Activated B cell treated with CpG ODN at 0.5 μM for 24 hours (primary cell): ENCODE measurements at regions of chr3 and their contacts with region 1.

Region 1: GRCh38 chr3:9986237-9986725 is 360 bp downstream of the EMC3 start:
- DNase-seq: no peak
- ATAC-seq: peak; percentile 28
- H3K4me3 Mint-ChIP-seq: peak overlapping the region; percentile 98
- H3K27ac Mint-ChIP-seq: peak overlapping the region; percentile 100
- H3K4me1 Mint-ChIP-seq: peaks cover 24% of the 10 kb centered on the region
- H3K27me3 Mint-ChIP-seq: no peaks in the 10 kb centered on the region
- CTCF ChIP-seq: no peak

Region 2: DNA sequence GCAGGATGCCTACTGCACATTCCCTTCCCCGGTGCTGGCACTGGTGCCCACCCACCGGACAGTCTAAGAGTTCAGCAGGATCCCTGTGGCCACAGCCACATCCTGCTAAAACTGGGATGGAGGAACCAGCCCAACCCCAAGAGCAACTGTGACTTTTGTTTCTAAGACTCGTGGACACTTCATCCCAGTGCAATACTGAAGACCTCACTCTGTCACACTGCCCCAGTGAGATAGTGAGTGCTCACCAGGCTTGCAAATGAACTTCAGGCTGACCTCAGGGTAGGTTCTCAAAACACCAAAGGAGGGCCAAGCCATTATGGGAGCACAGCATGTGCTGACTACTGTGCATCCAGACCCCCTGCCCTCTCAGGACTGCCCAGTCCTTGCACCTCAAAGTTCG is 383.7 kb before region 1 on chr3:
- CTCF ChIA-PET with region 1: no interaction called
- POLR2A ChIA-PET with region 1: no interaction called
- intact Hi-C with region 1: no loop called
- DNase-seq: no peak
- ATAC-seq: no peak
- H3K4me3 Mint-ChIP-seq: no peak overlapping the region
- H3K27ac Mint-ChIP-seq: no peak overlapping the region
- H3K4me1 Mint-ChIP-seq: peaks cover 2% of the 10 kb centered on the region
- H3K27me3 Mint-ChIP-seq: peaks cover 39% of the 10 kb centered on the region
- CTCF ChIP-seq: no peak

Region 3: DNA sequence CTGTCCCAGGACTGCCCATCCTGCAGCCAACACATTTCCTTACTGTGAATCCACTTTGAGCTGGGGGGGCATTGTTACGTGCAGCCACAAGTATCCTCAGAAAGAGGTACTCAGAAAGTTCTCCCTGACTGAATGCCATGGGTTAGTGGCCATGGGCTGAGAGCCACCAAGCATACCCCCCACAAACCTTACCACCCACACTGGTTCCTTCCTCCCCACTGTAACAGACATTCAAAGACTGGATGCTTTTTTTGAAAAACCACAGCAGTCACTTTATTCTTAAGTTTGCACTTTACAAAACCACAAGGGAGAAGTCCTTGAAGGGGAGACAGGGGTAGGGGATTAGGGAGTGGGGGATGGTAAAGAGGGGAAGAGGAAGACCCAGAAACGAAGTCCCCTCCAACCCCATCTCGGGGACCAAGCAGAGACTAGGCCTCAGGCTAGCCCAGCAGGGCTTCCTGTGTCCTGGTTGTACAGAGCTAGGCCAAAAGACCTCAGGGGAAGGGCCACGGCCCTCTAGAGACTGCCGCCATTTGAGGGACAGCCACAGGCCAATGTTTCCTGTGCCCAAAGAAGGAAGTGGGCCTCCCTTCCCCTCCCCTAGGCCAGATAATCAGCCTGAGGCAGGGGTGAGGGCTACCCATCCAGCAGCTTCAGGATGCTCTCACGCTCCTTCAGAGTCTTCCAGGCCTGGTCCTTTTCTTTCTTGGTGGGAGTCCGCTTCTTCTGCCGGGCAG is 206.4 kb before region 1 on chr3:
- CTCF ChIA-PET with region 1: interaction called, 3 read pairs
- POLR2A ChIA-PET with region 1: interaction called, 13 read pairs
- intact Hi-C with region 1: no loop called
- DNase-seq: peak; percentile 30
- ATAC-seq: peak; percentile 76
- H3K4me3 Mint-ChIP-seq: peak overlapping the region; percentile 32
- H3K27ac Mint-ChIP-seq: peak overlapping the region; percentile 88
- H3K4me1 Mint-ChIP-seq: peaks cover 58% of the 10 kb centered on the region
- H3K27me3 Mint-ChIP-seq: no peaks in the 10 kb centered on the region
- CTCF ChIP-seq: no peak

Region 4: DNA sequence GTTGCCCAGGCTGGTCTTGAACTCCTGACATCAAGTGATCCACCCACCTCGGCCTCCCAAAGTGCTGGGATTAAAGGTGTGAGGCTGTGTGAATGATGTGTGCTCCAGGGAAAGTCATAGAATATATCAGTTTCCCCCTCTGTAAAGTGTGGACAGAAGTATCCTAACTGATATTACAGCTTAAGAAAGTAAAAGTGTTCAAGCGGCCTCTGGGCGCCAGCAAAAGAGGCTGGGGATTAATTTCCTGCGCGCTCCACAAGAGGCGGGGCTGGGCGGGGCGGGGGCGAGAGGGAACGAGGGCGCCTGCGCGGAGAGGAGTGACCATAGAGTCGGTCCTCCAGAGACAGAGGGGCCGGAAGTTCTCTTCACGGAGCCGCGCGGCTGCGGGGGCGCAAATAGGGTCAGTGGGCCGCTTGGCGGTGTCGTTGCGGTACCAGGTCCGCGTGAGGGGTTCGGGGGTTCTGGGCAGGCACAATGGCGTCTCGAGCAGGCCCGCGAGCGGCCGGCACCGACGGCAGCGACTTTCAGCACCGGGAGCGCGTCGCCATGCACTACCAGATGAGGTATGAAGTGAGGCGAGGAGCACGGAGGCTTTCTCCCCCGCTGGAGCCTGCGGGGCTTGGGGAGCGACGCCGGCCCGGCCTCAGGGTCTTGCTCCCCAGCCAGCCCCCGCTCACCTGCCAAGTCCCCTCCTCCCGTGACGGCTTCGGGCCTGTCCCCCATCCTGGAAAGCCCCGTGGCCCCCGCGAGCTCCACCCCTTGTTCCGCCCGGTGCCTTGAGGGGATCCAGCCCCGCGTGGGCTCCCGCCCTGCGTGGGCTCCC is 95.8 kb before region 1 on chr3 and contains the start of gene JAGN1:
- CTCF ChIA-PET with region 1: no interaction called
- POLR2A ChIA-PET with region 1: interaction called, 14 read pairs
- intact Hi-C with region 1: loop called (anchors 1 kb)
- DNase-seq: peak; percentile 85
- ATAC-seq: peak; percentile 86
- H3K4me3 Mint-ChIP-seq: peak within 1 kb of the TSS; percentile 94
- H3K27ac Mint-ChIP-seq: peak within 1 kb of the TSS; percentile 97
- H3K4me1 Mint-ChIP-seq: peaks cover 44% of the 10 kb centered on the region
- H3K27me3 Mint-ChIP-seq: no peaks in the 10 kb centered on the region
- CTCF ChIP-seq: no peak
- total RNA-seq, gene JAGN1: 30.9 and 32.1 TPM in 2 replicates

Region 5: DNA sequence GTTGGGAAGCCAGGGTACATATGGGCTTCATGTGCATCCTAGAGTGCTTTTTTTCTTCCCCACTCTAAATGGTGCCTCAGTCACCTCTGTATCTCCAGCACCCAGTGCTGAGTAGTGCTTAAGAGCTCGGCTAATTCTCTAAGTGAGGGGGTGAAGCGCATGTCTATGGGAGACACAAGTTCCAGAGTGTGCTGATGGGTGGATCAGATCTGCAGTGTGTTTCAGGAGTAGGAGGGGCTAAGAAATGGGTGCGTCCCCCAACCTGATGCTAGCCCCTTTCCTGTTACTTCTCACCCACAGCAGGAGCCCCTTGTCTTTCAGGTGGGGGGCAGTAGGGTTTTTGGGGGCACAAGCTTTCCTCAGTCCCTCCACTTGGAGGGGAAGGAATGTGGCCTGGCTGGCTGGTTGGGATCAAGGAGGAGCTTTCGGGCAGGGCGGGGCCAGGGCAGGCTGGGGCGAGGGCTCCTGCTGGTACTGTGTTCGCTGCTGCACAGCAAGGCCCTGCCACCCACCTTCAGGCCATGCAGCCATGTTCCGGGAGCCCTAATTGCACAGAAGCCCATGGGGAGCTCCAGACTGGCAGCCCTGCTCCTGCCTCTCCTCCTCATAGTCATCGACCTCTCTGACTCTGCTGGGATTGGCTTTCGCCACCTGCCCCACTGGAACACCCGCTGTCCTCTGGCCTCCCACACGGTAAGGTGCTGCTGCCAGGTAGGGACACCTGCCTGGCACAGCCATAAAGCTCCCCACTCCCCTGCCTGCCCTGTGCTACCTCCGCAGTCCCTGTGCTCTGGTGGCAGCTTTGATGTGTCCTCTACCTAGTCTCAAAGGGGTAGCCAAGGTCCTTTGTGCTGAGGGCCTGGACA is 83.7 kb before region 1 on chr3 and contains the start of gene IL17RE:
- CTCF ChIA-PET with region 1: no interaction called
- POLR2A ChIA-PET with region 1: no interaction called
- intact Hi-C with region 1: no loop called
- DNase-seq: no peak
- ATAC-seq: no peak
- H3K4me3 Mint-ChIP-seq: no peak within 1 kb of the TSS
- H3K27ac Mint-ChIP-seq: no peak within 1 kb of the TSS
- H3K4me1 Mint-ChIP-seq: peaks cover 7% of the 10 kb centered on the region
- H3K27me3 Mint-ChIP-seq: no peaks in the 10 kb centered on the region
- CTCF ChIP-seq: no peak
- total RNA-seq, gene IL17RE: 0.66 and 0.82 TPM in 2 replicates

Region 6: GRCh38 chr3:10010486-10011465 is 24.5 kb after region 1 on chr3:
- CTCF ChIA-PET with region 1: no interaction called
- POLR2A ChIA-PET with region 1: interaction called, 14 read pairs
- intact Hi-C with region 1: loop called (anchors 1 kb)
- DNase-seq: peak; percentile 86
- ATAC-seq: peak; percentile 86
- H3K4me3 Mint-ChIP-seq: peak overlapping the region; percentile 65
- H3K27ac Mint-ChIP-seq: peak overlapping the region; percentile 1
- H3K4me1 Mint-ChIP-seq: peaks cover 23% of the 10 kb centered on the region
- H3K27me3 Mint-ChIP-seq: no peaks in the 10 kb centered on the region
- CTCF ChIP-seq: no peak

Region 7: DNA sequence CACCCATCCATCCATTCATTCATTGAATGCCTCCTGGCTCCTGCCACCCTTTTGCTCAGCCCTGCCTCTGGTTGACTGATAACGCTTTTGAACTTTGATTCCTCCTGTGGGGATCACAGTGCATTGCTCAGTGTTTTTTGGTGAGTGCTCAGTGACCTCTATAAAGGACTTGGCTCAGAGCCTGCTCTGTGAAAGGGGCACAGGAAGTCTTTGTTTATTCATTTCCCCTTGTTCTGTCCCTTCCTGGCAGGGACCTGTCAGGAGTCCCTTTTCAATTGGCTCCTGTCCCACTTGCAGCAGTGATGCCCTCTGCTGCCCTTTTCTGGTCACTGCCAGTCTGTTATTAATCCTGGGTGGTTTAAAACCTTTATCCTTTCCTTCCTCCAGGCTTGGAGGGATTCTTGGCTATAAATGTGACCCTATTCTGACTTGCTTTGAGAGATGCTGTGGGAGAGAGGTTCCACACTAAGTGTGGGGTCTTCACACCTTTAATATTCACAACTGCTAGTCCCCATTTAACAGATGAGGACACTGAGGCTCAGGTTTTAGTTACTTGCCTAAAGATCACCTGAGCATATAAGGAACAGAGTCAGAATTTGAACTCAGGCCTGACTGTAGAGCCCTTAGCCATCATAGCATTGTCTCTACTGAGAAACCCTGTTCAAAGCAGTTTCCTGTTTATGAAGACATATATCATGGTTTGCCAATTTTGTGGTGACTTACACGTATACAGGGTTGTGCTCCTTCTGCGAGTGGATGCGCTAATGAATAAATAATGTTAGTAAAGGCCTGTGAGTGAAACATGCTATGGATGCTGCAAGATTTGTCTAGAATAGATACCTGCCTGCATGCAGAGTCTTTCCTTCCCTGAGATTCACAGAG is 238.7 kb after region 1 on chr3:
- CTCF ChIA-PET with region 1: interaction called, 4 read pairs
- POLR2A ChIA-PET with region 1: interaction called, 10 read pairs
- intact Hi-C with region 1: loop called (anchors 2 kb)
- DNase-seq: peak; percentile 32
- ATAC-seq: peak; percentile 63
- H3K4me3 Mint-ChIP-seq: peak overlapping the region; percentile 48
- H3K27ac Mint-ChIP-seq: peak overlapping the region; percentile 61
- H3K4me1 Mint-ChIP-seq: peaks cover 65% of the 10 kb centered on the region
- H3K27me3 Mint-ChIP-seq: no peaks in the 10 kb centered on the region
- CTCF ChIP-seq: peak; percentile 85